PC-3 (cell line): ENCODE measurements at regions of chr4 and their contacts with region 1.

Region 1: DNA sequence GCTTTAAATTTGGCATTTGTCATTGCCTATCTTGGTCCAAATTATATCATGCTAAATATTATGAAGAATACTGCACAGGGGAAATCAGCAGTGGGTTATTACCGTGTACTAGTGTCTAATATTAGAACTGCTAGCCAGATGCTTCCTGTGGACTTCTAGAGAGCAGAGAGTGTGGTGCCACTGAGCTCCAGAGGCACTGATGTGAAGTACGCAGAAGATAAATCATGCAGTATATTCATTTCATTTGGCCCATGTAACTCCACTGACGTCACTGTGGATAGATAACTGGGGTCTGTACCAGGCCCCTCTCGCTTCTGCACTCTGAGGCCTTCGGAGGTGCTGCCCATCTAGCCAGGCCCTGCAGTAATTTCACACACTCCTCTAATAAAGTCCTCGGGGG is 80.0 kb downstream of the ALPK1 start:
- DNase-seq: no peak
- ATAC-seq: no peak
- H3K4me3 ChIP-seq: no peak overlapping the region
- H3K27ac ChIP-seq: no peak overlapping the region
- H3K4me1 ChIP-seq: no peaks in the 10 kb centered on the region
- H3K27me3 ChIP-seq: no peaks in the 10 kb centered on the region
- CTCF ChIP-seq: no peak

Region 2: DNA sequence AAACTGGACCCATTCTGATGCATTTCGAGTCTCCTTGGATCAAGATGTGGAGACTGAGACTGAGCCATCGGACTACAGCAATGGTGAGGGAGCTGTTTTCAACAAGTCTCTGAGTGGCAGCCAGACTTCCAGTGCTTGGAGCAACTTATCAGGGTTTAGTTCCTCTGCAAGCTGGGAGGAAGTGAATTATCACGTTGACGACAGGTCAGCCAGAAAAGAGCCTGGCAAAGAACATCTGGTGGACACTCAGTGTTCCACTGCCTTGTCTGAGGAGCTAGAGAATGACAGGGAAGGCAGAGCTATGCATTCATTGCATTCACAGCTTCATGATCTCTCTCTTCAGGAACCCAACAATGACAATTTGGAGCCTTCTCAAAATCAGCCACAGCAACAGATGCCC is 54.0 kb after region 1 on chr4:
- CTCF ChIA-PET with region 1: no interaction called
- POLR2A ChIA-PET with region 1: interaction called, 17 read pairs
- intact Hi-C with region 1: no loop called
- DNase-seq: no peak
- ATAC-seq: no peak
- H3K4me3 ChIP-seq: no peak overlapping the region
- H3K27ac ChIP-seq: no peak overlapping the region
- H3K4me1 ChIP-seq: no peaks in the 10 kb centered on the region
- H3K27me3 ChIP-seq: no peaks in the 10 kb centered on the region
- CTCF ChIP-seq: no peak